OCI-LY7 (cell line): ENCODE measurements at regions of chr11 and their contacts with region 1.

Region 1: DNA sequence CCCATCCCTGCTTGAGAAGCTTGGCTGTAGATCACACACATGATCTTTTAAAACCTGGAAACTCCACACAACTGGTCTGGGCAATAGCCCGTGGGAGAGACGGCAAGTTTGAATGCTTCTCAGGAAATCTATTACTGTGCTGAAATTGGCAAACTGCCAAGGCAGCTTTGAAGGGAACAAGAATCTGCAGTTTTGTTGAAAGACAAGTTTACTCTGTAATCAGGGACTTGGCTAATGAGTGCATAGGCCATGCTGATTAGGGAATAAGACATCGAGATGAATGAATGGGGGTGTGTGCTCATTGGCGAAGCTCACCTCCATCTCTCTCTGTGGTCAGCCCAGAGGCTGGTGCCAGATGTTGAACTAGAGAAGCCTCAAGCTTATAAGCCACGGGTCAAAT is 218.8 kb downstream of the HIPK3 start:
- DNase-seq: peak; percentile 71
- H3K4me3 ChIP-seq: peak overlapping the region; percentile 43
- H3K27ac ChIP-seq: peak overlapping the region; percentile 81
- H3K4me1 ChIP-seq: peaks cover 100% of the 10 kb centered on the region
- CTCF ChIP-seq: no peak

Region 2: DNA sequence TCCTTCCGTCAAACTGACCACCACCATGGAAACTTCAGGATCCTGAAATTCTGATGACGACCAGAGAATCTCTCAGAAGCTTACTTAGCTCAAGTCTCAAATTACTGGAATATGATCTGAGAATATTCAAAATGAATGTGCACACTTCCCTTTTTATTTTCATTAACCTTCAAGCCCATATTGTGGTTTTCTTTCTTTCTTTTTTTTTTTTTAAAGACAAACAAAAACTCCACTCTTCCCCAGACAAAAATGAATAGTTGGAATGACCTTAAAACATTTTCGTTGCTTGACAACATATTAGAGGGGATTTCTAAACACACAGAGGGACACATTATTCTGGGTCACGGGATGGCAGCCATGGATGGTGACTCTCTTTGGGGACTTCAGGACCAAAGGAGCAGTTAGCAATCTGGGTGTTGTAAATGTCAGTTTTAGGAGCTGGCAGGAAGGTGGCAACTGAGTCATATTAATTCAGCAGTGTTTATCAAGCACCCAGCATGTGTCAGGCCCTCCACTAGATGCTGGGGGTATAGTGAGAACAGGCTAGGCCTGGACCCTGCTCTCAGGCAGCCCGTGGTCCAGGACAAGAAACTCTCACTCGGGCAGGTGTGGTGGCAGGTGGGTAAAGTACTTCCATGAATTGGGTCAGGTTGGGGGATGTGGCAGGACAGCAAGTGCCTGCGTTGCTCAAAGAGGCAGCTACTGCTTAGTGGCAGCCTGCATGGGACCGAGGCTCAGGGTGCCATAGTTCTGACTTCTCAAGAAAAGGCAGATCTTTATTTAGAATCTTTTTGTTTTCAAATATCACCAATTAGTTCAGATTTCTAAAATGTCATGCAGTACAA is 92.7 kb before region 1 on chr11:
- CTCF ChIA-PET with region 1: interaction called, 5 read pairs
- POLR2A ChIA-PET with region 1: interaction called, 31 read pairs
- intact Hi-C with region 1: loop called (anchors 2 kb)
- DNase-seq: peak; percentile 69
- H3K4me3 ChIP-seq: peak overlapping the region; percentile 58
- H3K27ac ChIP-seq: peak overlapping the region; percentile 96
- H3K4me1 ChIP-seq: peaks cover 100% of the 10 kb centered on the region
- CTCF ChIP-seq: peak; percentile 35; the same call in 1 of the 2 replicates

Region 3: GRCh38 chr11:33402066-33402465 is 73.9 kb before region 1 on chr11:
- CTCF ChIA-PET with region 1: no interaction called
- POLR2A ChIA-PET with region 1: interaction called, 5 read pairs
- intact Hi-C with region 1: loop called (anchors 5 kb)
- DNase-seq: peak; percentile 85
- H3K4me3 ChIP-seq: peak overlapping the region; percentile 54
- H3K27ac ChIP-seq: peak overlapping the region; percentile 88
- H3K4me1 ChIP-seq: peaks cover 88% of the 10 kb centered on the region
- CTCF ChIP-seq: no peak

Region 4: DNA sequence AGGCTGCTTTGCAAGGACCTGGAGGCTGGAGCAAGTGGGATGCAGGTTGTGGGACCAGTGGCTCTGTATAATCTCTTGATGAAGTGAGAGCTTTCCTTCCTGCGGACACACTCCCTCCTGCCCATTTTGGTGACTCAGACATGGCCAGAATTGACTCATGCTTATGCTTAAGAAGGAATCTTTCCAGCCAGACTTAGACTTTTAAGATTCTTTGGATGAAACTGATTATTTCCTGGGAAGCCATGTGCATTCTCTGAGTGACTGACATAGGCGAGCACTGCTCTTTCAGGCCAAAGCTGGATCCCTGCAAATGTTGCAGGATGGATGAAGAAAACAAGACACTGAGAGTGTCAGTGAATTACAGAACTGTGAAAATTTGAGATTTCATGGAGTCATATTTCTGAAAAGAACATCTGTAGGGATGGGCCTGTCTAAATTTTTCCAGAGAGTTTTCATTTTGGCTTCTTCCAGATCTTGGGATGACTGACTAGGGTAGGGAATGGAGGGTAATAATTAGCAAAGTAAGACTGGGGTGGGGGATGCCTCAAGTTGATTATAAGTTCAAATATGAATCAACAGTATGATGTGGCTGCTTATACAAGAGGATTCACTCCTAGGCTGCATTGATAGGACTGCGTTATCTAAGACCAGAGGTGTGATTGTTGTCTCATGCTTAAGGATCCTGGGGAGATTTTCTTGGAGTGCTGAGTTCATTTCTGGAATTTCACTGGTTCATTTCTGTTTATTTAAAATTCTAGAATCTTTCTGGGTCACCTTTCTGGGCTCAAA is 23.0 kb before region 1 on chr11:
- CTCF ChIA-PET with region 1: interaction called, 5 read pairs
- POLR2A ChIA-PET with region 1: interaction called, 21 read pairs
- intact Hi-C with region 1: no loop called
- DNase-seq: no peak
- H3K4me3 ChIP-seq: no peak overlapping the region
- H3K27ac ChIP-seq: no peak overlapping the region
- H3K4me1 ChIP-seq: peaks cover 40% of the 10 kb centered on the region
- CTCF ChIP-seq: no peak

Region 5: DNA sequence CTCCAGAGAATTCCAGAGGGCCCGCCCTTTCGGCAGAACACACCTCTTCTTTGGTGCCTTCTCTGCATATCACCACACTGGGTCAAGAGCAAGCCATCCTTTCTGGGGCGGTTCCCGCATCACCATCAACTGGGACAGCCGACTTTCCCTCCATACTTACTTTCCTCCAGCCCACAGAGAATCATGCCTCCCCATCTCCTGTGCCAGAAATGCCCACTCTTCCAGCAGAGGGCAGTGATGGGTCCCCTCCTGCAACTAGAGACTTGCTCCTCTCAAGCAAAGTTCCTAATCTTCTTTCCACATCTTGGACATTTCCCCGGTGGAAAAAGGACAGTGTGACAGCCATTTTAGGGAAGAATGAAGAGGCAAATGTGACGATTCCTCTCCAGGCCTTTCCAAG is 66.9 kb after region 1 on chr11:
- CTCF ChIA-PET with region 1: no interaction called
- POLR2A ChIA-PET with region 1: no interaction called
- intact Hi-C with region 1: loop called (anchors 2 kb)
- DNase-seq: peak; percentile 51
- H3K4me3 ChIP-seq: no peak overlapping the region
- H3K27ac ChIP-seq: no peak overlapping the region
- H3K4me1 ChIP-seq: peaks cover 42% of the 10 kb centered on the region
- CTCF ChIP-seq: peak; percentile 82